Right cardiac atrium (tissue), 5 donors: ENCODE measurements at regions of chr16 and their contacts with region 1.

Region 1: GRCh38 chr16:19086322-19087199 is 19.1 kb downstream of the COQ7 start:
- DNase-seq: peak; percentile 85 to 95 (median 94)
- ATAC-seq: peak; percentile 96 to 97
- H3K4me3 ChIP-seq: peak overlapping the region; percentile 48
- H3K27ac ChIP-seq: no peak overlapping the region
- H3K4me1 ChIP-seq: no peaks in the 10 kb centered on the region
- H3K27me3 ChIP-seq: no peaks in the 10 kb centered on the region

Region 2: DNA sequence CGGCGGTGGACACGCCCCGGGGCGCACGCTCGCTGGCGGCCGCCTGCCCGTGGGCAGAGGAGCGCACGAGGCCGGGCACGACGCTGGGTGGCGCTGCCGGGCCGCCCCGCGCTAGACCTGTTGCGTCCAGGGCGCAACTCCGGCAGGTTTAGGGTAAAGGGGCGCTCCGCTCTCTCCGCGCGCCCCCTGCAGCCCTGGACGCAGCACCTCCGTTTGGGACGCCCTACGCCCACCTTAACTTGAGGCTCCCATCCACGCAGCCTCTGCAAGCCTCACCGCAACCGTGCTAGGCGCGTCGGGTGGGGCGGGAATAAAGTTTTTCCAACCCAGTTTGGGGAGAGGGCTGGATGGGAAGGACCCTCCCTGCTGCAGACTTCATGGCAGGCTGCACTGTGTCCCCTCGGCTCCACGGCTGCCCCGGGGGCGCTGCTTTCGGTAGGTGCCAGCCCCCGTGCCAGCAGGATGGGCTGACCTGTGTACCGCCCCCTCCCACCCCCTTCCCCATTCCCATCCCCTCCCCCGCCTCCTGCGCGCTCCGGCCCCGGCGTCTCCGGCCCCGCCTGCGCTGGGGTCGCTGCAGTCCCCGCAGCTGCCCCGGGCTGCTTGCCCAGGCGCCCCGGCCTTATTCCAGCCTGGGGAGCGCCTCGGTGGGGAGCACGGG is 81.3 kb after region 1 on chr16 and contains the start of gene SYT17:
- intact Hi-C with region 1: loop called in 1 of 4 experiments (anchors 5 kb)
- DNase-seq: peak; percentile 78 to 91 (median 91)
- ATAC-seq: peak; percentile 94
- H3K4me3 ChIP-seq: peak within 1 kb of the TSS; percentile 55
- H3K27ac ChIP-seq: no peak within 1 kb of the TSS
- H3K4me1 ChIP-seq: no peaks in the 10 kb centered on the region
- H3K27me3 ChIP-seq: no peaks in the 10 kb centered on the region
- total RNA-seq, gene SYT17: 0.86 to 1.3 (median 1.1) TPM

Region 3: DNA sequence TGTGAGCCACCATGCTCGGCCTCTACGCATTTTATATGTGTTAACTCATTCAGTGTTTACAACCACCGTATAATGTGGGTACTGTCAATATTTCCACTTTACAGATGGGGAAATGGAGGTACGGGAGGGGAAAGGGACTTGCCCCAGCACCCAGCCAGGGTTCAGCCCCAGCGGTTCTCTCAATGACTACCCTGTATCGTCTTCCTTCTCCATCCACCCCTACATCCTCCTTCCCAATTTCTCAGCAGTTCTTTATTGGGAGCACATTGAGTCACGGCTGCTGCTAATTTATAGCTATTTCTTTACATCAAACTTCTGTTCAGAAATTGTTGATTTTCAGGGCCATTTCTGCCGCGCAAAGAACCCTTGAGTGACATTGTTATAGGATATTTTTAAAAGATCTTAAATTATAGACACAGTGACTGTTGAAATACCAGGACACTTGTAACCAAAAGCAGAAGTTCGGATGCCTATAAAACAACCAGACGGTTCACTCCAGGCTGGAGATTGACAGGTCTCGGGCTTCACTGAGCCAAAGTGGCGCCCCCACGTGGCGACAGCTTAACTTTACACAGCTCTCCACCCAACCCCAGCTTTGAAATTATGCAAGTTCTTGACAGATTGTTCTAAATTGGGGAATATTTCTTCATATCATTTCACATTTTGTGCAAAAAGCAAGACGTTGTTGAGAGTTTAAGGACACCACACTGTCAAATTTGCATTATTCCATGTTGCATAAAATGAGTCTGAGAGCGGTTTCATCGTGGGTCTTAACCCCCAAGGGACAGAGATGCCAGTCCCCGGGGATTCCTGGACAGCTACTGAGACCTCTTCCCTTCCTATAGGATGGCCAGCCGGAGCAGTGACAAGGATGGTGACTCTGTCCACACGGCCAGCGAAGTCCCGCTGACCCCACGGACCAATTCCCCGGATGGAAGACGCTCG is 93.3 kb after region 1 on chr16:
- intact Hi-C with region 1: loop called in 3 of 4 experiments (anchors 2 to 5 kb)
- DNase-seq: peak; percentile 70 to 88 (median 85)
- ATAC-seq: peak; percentile 73 to 80
- H3K4me3 ChIP-seq: no peak overlapping the region
- H3K27ac ChIP-seq: no peak overlapping the region
- H3K4me1 ChIP-seq: no peaks in the 10 kb centered on the region
- H3K27me3 ChIP-seq: no peaks in the 10 kb centered on the region

Region 4: GRCh38 chr16:19338335-19338734 is 251.8 kb after region 1 on chr16:
- intact Hi-C with region 1: no loop called
- DNase-seq: no peak
- ATAC-seq: no peak
- H3K4me3 ChIP-seq: no peak overlapping the region
- H3K27ac ChIP-seq: no peak overlapping the region
- H3K4me1 ChIP-seq: no peaks in the 10 kb centered on the region
- H3K27me3 ChIP-seq: no peaks in the 10 kb centered on the region

Region 5: GRCh38 chr16:19375561-19376158 is 289.1 kb after region 1 on chr16:
- intact Hi-C with region 1: loop called (anchors 2 to 5 kb)
- DNase-seq: peak in 1 of 3 donors; percentile 22
- ATAC-seq: peak; percentile 50 to 71
- H3K4me3 ChIP-seq: no peak overlapping the region
- H3K27ac ChIP-seq: no peak overlapping the region
- H3K4me1 ChIP-seq: no peaks in the 10 kb centered on the region
- H3K27me3 ChIP-seq: no peaks in the 10 kb centered on the region

Region 6: DNA sequence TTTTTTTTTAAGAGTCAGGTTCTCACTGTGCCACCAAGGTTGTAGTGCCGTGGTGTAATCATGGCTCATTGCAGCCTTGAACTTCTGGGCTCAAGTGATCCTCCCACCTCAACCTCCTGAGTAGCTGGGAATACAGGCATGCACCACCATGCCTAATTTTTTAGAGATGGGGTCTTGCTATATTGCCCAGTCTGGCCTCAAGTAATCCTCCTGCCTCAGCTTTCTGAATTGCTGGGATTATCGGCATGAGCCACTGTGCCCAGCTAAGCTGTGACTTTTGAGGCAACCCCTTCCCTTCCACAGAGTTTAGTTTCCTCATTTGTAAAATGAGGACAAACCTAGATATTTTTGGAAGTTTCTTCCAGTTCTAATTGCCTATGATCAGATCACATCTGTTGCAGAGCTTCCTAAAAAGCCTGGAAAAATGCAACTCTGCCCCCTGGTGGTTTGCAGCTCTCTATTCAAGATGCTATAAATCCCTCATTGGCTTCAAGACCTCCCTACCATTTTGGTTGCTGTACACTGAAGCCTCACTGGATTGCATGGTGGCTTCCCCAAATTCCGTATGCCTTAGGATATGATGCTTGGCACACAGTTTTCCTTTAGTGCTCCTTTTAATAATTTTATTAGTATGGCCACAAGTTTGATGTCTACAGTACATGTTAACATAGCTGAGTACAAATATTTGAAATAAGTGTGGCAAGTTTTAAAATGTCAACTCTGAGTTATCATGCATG is 416.0 kb after region 1 on chr16:
- intact Hi-C with region 1: loop called (anchors 5 to 10 kb)
- DNase-seq: peak in 2 of 3 donors; percentile 76 to 84
- ATAC-seq: peak; percentile 60 to 68
- H3K4me3 ChIP-seq: no peak overlapping the region
- H3K27ac ChIP-seq: no peak overlapping the region
- H3K4me1 ChIP-seq: no peaks in the 10 kb centered on the region
- H3K27me3 ChIP-seq: no peaks in the 10 kb centered on the region